ENCODE measurements at regions of chr1 and their contacts with region 1.

Region 1: DNA sequence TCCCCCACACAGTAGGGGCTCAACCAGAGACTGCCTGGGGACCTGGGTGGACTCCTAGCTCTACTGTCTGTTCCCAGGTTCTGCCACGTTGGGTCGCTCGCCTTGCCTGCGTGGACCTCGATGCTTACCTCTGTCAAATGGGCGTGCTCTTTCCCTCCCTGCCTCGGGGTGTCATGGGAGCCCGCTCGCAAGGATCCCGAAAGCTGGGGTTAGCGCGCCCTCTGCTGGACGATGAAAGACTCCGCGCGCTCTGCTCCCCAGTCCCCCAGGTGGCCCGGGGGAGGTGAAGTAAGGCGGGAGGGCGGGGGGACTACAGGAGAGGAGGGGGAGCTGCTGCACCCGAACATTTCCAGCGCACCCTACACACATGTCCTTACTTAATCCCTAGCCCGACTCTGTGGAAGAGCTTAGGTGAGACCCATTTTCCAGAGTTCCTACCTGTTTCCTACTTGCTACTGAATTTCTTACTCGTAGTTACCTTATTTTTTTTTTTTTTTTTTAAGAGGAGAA is 2.3 kb upstream of the BSND start:
- DNase-seq: peak; percentile 84
- H3K4me3 ChIP-seq: no peak overlapping the region
- H3K27ac ChIP-seq: no peak overlapping the region
- H3K4me1 ChIP-seq: peaks cover 0 to 11% (median 10%) of the 10 kb centered on the region in 4 donors
- H3K27me3 ChIP-seq: peaks cover 36% of the 10 kb centered on the region
- CTCF ChIP-seq: peak; percentile 77 to 91 (median 88)
- EP300 ChIP-seq: no peak
- POLR2A ChIP-seq: no peak

Region 2: DNA sequence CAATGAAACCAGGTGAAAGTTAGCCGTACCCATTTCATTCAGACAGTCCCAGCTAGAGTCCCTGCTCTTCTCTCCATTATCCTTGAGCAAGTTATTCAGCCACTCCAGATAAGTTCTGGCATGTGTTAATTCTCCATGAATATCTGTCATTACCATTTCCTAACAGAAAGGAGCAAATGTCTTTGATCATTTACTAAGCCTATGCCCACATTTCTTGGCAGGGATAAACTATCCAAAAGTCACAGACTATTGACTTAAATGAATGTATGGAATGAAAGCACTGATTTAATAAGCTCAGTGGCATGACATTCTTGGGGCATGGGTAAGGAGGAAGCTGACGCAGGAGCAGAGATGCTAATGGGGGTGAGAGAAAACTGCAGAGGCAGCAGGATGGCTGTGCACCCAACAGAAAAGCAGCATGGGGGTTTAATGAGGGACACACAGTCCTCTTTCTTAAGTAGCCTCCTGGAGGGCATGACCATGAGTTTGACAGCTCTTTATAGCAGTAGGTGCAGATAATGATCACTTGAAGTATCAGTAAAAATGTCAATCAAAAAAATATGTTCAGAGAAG is 91.9 kb before region 1 on chr1:
- in situ Hi-C with region 1: no loop called
- intact Hi-C with region 1: no loop called
- DNase-seq: no peak
- H3K4me3 ChIP-seq: no peak overlapping the region
- H3K27ac ChIP-seq: no peak overlapping the region
- H3K4me1 ChIP-seq: no peaks in the 10 kb centered on the region
- H3K27me3 ChIP-seq: no peaks in the 10 kb centered on the region
- CTCF ChIP-seq: no peak
- EP300 ChIP-seq: no peak
- POLR2A ChIP-seq: no peak

Region 3: DNA sequence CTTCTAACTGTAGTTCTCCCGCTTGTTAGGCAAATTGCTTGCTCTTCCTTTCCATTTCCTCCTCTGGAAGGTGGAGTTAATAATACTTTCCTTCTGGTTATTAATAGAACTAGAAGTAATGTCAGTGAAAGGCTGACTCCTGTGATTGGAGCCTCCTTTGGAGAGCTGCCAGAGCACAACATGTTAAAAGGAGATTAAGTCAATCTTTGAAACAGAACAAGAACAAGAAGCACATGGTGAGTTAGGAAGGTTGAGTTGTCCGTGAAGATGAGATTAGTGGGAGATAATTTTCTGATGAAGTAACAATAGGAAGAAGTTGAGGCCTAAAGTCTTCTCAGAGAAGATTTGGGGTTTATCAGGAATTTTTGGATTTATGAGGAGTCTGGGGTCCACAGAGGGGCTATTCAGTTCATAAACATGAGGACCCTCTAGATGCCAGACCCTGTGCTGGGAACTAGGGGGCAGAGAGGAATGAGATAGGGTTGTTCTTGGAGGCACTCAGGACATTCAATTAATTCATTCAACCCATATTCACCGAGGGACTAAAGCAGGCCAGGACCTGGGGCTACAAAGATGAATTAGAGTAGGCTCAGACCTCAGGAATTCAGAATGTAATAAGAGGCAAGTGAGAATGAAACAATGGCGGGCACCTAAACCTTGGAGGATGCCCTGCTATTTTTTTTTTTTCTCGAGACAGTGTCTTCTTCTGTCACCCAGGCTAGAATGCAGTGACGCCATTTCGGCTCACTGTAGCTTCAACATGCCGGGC is 68.8 kb before region 1 on chr1:
- in situ Hi-C with region 1: no loop called
- intact Hi-C with region 1: no loop called
- DNase-seq: no peak
- H3K4me3 ChIP-seq: no peak overlapping the region
- H3K27ac ChIP-seq: no peak overlapping the region
- H3K4me1 ChIP-seq: no peaks in the 10 kb centered on the region
- H3K27me3 ChIP-seq: no peaks in the 10 kb centered on the region
- CTCF ChIP-seq: no peak
- EP300 ChIP-seq: no peak
- POLR2A ChIP-seq: no peak

Region 4: DNA sequence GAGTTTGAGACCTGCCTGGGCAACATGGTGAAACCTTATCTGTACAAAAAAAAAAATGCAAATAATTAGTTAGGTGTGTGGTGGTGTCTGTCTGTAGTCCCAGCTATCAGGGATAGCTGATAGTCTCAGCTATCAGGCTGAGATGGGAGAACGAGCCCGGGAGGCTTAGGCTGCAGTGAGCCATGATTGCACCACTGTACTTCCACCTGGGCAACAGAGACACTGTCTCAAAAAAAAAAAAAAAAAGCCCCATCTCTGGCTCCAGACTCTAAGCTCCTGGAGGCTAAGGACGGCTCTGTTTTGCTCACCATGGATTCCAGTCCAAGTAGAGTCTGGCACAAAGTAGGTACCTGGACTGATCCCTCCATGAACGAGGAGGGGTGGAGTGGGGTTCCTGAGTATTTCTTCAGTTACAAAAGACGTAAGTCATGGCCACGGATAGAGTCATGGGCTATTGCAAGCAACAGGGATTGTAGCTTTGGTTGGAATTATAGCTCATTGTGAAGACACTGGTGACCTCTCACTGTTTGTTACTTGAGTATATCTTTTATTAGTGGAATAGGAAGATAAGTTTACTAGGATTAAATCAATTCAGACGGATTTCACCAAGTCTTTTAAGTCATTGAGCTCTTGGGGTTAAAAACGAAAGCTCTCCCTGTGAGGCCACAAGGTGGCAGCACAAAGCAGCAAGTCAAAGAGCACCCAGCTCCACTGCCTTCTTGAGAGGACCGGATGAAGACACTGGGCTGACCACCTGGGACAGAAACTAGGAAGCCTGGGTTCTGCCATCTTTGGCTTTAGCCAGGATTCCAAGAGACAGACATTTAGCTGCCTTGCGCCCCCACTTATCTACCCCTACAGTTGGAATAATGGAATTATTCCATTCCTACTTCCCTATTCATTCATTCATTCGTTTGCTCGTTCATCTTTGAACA is 51.5 kb before region 1 on chr1:
- in situ Hi-C with region 1: loop called in 3 of 4 experiments (anchors 5 kb)
- intact Hi-C with region 1: loop called (anchors 2 kb)
- DNase-seq: peak; percentile 82
- H3K4me3 ChIP-seq: peak overlapping the region in 1 of 4 donors; percentile 9
- H3K27ac ChIP-seq: peak overlapping the region; percentile 49 to 73 (median 64)
- H3K4me1 ChIP-seq: peaks cover 0 to 20% (median 6%) of the 10 kb centered on the region in 4 donors
- H3K27me3 ChIP-seq: no peaks in the 10 kb centered on the region
- CTCF ChIP-seq: peak; percentile 75 to 85 (median 81)
- EP300 ChIP-seq: no peak
- POLR2A ChIP-seq: no peak

Region 5: GRCh38 chr1:54950369-54951163 is 45.8 kb before region 1 on chr1:
- in situ Hi-C with region 1: loop called in 3 of 4 experiments (anchors 5 kb)
- intact Hi-C with region 1: loop called (anchors 2 kb)
- DNase-seq: peak; percentile 80
- H3K4me3 ChIP-seq: peak overlapping the region in 1 of 4 donors; percentile 19
- H3K27ac ChIP-seq: peak overlapping the region in 2 of 4 donors; percentile 14 to 39
- H3K4me1 ChIP-seq: peaks cover 3 to 24% (median 13%) of the 10 kb centered on the region in 4 donors
- H3K27me3 ChIP-seq: no peaks in the 10 kb centered on the region
- CTCF ChIP-seq: peak; percentile 66 to 87 (median 82)
- EP300 ChIP-seq: no peak
- POLR2A ChIP-seq: no peak